Transverse colon (tissue), 4 donors: ENCODE measurements at regions of chr5 and their contacts with region 1.

Region 1: GRCh38 chr5:108681079-108681921 is 66.4 kb upstream of the FER start:
- DNase-seq: no peak
- H3K4me3 ChIP-seq: no peak overlapping the region
- H3K27ac ChIP-seq: peak overlapping the region in 2 of 4 donors; percentile 42 to 55
- H3K4me1 ChIP-seq: peaks cover 0 to 5% (median 0%) of the 10 kb centered on the region in 4 donors
- H3K27me3 ChIP-seq: no peaks in the 10 kb centered on the region
- CTCF ChIP-seq: peak; percentile 79 to 84 (median 81)
- EP300 ChIP-seq: no peak
- POLR2A ChIP-seq: no peak

Region 2: DNA sequence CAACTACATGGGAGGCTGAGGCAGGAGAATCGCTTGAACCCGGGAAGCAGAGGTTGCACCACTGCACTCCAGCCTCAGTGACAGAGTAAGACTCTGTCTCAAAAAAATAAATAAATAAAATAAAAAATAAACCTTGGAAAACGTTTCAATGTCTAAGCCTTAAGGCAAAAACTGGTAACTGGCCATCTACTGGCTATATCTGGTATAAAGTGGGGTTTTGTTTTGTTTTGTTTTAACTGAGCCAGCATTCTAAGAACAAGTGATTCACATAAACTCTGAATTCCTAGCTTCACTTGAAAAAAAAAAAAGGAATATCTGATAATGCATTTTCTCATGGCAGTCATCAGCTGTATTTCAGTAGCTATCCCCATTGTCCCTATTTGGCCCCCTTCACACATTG is 884.5 kb before region 1 on chr5:
- in situ Hi-C with region 1: no loop called
- intact Hi-C with region 1: no loop called
- DNase-seq: no peak
- H3K4me3 ChIP-seq: no peak overlapping the region
- H3K27ac ChIP-seq: no peak overlapping the region
- H3K4me1 ChIP-seq: no peaks in the 10 kb centered on the region
- H3K27me3 ChIP-seq: no peaks in the 10 kb centered on the region
- CTCF ChIP-seq: no peak
- EP300 ChIP-seq: no peak
- POLR2A ChIP-seq: no peak

Region 3: GRCh38 chr5:108884736-108885135 is 203.4 kb after region 1 on chr5:
- in situ Hi-C with region 1: loop called in 1 of 4 experiments (anchors 25 kb)
- intact Hi-C with region 1: no loop called
- DNase-seq: no peak
- H3K4me3 ChIP-seq: no peak overlapping the region
- H3K27ac ChIP-seq: no peak overlapping the region
- H3K4me1 ChIP-seq: no peaks in the 10 kb centered on the region
- H3K27me3 ChIP-seq: no peaks in the 10 kb centered on the region
- CTCF ChIP-seq: no peak
- EP300 ChIP-seq: no peak
- POLR2A ChIP-seq: no peak

Region 4: DNA sequence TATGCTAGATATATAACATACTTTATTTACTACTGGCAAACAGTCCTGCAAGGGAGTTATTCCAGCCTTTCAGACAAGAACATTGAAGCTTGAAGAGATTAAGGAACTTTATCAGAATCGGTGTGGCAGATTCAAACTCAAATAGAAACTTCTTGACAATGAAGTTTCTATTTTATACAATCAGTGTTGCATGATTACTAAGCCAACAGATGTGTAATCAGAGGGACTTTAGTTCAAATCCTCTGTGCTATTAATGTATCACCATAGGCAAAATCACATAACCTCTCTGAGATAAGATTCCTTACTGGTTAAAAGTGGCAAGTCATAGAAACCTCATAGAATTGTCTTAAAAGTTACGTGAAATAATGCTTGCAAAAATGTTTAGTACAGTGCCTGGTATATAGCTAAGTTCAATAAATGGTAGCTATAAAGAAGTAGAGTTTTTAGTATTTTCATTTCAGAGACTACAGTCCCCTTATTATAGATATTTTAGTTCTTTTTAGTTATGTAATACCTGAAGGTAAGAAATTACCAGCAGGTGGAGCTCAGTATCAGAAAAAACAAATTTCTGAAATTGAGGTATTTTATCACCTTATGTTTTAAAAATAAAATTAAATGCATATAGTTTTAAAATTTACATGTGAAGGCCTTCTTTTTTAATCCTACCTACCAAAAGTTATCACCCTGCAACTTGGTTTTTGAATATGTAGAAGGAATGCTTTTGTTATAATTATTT is 238.5 kb after region 1 on chr5:
- in situ Hi-C with region 1: loop called in 1 of 4 experiments (anchors 25 kb)
- intact Hi-C with region 1: no loop called
- DNase-seq: no peak
- H3K4me3 ChIP-seq: no peak overlapping the region
- H3K27ac ChIP-seq: no peak overlapping the region
- H3K4me1 ChIP-seq: peaks cover 0 to 6% (median 0%) of the 10 kb centered on the region in 4 donors
- H3K27me3 ChIP-seq: no peaks in the 10 kb centered on the region
- CTCF ChIP-seq: peak; percentile 14 to 36 (median 31)
- EP300 ChIP-seq: no peak
- POLR2A ChIP-seq: no peak

Region 5: GRCh38 chr5:109468737-109469420 is 787.6 kb after region 1 on chr5:
- in situ Hi-C with region 1: loop called in 1 of 4 experiments (anchors 25 kb)
- intact Hi-C with region 1: no loop called
- DNase-seq: peak; percentile 97
- H3K4me3 ChIP-seq: no peak overlapping the region
- H3K27ac ChIP-seq: no peak overlapping the region
- H3K4me1 ChIP-seq: peaks cover 0 to 10% (median 5%) of the 10 kb centered on the region in 4 donors
- H3K27me3 ChIP-seq: no peaks in the 10 kb centered on the region
- CTCF ChIP-seq: peak; percentile 73 to 88 (median 78)
- EP300 ChIP-seq: no peak
- POLR2A ChIP-seq: no peak

Region 6: GRCh38 chr5:109688971-109689739 is 1007.9 kb after region 1 on chr5:
- in situ Hi-C with region 1: loop called in 1 of 4 experiments (anchors 25 kb)
- intact Hi-C with region 1: no loop called
- DNase-seq: peak; percentile 90
- H3K4me3 ChIP-seq: peak overlapping the region; percentile 88 to 97 (median 96)
- H3K27ac ChIP-seq: peak overlapping the region; percentile 96 to 100 (median 99)
- H3K4me1 ChIP-seq: peaks cover 17 to 41% (median 23%) of the 10 kb centered on the region in 4 donors
- H3K27me3 ChIP-seq: no peaks in the 10 kb centered on the region
- CTCF ChIP-seq: peak in 1 of 5 experiments; percentile 20
- EP300 ChIP-seq: no peak
- POLR2A ChIP-seq: peak; percentile 90